ENCODE measurements at regions of chr10 and their contacts with region 1.

Region 1: GRCh38 chr10:110671788-110672579 is 27.8 kb downstream of the RBM20 start:
- H3K4me3 ChIP-seq: peak overlapping the region; percentile 63
- H3K27ac ChIP-seq: peak overlapping the region; percentile 32; the same call in 1 of the 2 replicates
- H3K4me1 ChIP-seq: peaks cover 24% of the 10 kb centered on the region
- CTCF ChIP-seq: peak; percentile 98

Region 2: DNA sequence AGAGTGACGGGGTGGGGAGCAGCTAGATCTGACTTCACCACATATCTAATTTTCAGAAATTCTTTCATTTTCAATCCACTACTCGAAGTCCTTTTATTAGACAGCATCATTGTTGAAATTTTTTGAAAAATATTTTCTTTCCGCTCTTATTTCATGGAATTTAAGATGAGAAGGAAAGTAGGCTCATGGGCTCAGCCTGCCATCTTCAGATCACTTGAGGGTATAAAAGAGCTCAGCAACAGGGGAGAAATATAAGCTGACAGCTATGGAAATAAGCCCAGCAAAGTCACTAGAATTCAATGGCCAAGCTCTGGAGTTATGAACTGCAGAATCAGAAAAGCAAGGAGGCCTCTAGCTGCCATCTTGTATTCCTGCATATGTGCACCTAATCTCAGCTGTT is 1137.8 kb before region 1 on chr10:
- CTCF ChIA-PET with region 1: no interaction called
- POLR2A ChIA-PET with region 1: no interaction called
- H3K4me3 ChIP-seq: no peak overlapping the region
- H3K27ac ChIP-seq: no peak overlapping the region
- H3K4me1 ChIP-seq: no peaks in the 10 kb centered on the region
- CTCF ChIP-seq: no peak

Region 3: GRCh38 chr10:110151467-110151866 is 520.5 kb before region 1 on chr10:
- CTCF ChIA-PET with region 1: no interaction called
- POLR2A ChIA-PET with region 1: no interaction called
- H3K4me3 ChIP-seq: no peak overlapping the region
- H3K27ac ChIP-seq: no peak overlapping the region
- H3K4me1 ChIP-seq: no peaks in the 10 kb centered on the region
- CTCF ChIP-seq: no peak

Region 4: GRCh38 chr10:110610308-110610774 is 61.6 kb before region 1 on chr10:
- CTCF ChIA-PET with region 1: interaction called, 25 read pairs
- POLR2A ChIA-PET with region 1: no interaction called
- H3K4me3 ChIP-seq: no peak overlapping the region
- H3K27ac ChIP-seq: no peak overlapping the region
- H3K4me1 ChIP-seq: peaks cover 18% of the 10 kb centered on the region
- CTCF ChIP-seq: peak; percentile 74

Region 5: GRCh38 chr10:110617425-110618229 is 54.4 kb before region 1 on chr10:
- CTCF ChIA-PET with region 1: interaction called, 30 read pairs
- POLR2A ChIA-PET with region 1: interaction called, 3 read pairs
- H3K4me3 ChIP-seq: no peak overlapping the region
- H3K27ac ChIP-seq: no peak overlapping the region
- H3K4me1 ChIP-seq: peaks cover 17% of the 10 kb centered on the region
- CTCF ChIP-seq: no peak

Region 6: GRCh38 chr10:110629680-110630191 is 42.2 kb before region 1 on chr10:
- CTCF ChIA-PET with region 1: no interaction called
- POLR2A ChIA-PET with region 1: no interaction called
- H3K4me3 ChIP-seq: no peak overlapping the region
- H3K27ac ChIP-seq: peak overlapping the region; percentile 64
- H3K4me1 ChIP-seq: peaks cover 20% of the 10 kb centered on the region
- CTCF ChIP-seq: no peak

Region 7: DNA sequence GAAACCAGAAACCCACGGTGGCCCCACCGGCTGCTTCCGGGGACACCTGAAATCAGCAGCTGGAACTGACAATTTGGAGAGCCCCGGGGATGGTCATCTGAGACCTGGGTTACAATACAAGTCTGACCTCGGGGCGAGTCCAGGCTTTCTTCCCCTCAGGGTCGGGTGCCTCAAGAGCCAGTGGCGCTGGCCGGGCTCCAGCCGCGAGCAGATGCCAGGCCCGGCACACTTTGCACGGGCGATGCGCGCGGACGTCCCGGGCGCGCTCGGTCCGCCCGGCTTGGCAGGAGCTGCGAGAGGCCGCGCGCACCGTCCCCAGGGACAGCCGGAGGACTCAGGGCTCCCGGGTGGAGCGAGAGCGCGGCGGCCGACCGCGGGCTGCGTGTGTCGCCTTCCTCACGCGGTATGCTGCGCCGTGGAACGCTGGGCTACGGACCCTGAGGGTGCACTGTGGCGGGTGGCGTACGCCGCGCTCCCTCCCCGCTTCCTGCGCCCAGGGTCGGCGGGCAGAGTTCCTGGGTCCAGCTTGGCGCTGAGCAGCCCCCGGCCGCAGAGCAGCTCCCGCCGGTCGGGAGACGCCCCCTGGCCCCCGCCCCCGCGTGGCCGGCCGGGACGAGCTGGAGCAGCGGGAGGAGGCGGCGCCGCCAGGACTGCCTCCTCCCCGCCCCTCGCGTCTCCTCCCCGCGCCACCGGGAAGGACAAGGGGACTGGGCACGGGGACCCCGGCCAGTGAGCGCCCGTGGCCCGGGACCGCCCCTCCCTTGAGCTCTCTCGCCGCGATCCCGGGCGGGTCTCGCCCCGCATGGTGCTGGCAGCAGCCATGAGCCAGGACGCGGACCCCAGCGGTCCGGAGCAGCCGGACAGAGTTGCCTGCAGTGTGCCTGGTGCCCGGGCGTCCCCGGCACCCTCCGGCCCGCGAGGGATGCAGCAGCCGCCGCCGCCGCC is 28.1 kb before region 1 on chr10 and contains the start of gene RBM20:
- CTCF ChIA-PET with region 1: interaction called, 24 read pairs
- POLR2A ChIA-PET with region 1: interaction called, 6 read pairs
- H3K4me3 ChIP-seq: peak within 1 kb of the TSS; percentile 87
- H3K27ac ChIP-seq: peak within 1 kb of the TSS; percentile 86
- H3K4me1 ChIP-seq: peaks cover 44% of the 10 kb centered on the region
- CTCF ChIP-seq: peak; percentile 55; the same call in 1 of the 2 replicates

Region 8: DNA sequence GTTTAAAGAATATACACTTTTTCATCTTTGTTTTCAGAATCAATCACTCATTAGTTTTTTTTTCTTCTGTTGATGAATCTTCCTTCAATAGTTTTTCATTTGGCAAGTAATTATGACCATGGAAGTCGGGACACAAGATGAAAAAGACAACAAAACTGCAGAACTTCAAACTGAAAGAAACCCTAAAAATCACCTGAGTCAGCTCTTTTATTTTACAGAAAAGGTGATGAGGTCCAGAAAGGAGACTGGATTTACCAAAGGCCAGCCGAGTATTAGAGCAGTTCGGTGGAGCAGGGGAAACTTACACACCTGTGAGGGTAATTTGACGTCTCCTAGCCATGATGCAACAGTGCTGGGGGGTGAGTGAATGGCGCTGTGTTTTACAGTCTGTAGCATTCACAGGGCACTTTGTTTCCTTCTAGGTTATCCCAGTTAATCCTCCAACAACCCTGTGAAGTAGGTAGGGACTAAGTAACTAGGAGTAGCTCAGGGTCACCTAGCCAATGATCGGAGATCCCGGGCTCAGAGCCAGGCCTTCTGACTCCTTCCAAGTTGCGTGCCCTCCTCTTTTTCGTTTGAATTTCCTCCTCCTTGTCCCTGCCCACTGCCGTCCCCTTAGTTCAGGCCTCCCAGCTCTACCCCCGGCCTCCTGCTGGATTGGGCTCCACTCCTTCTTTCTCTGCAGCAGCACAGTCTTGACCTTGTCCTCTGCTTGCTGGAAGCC is 13.9 kb before region 1 on chr10:
- CTCF ChIA-PET with region 1: interaction called, 14 read pairs
- POLR2A ChIA-PET with region 1: interaction called, 5 read pairs
- H3K4me3 ChIP-seq: no peak overlapping the region
- H3K27ac ChIP-seq: no peak overlapping the region
- H3K4me1 ChIP-seq: peaks cover 11% of the 10 kb centered on the region
- CTCF ChIP-seq: no peak